CD8-positive, alpha-beta T cell (primary cell): ENCODE measurements at regions of chrX and their contacts with region 1.

Region 1: DNA sequence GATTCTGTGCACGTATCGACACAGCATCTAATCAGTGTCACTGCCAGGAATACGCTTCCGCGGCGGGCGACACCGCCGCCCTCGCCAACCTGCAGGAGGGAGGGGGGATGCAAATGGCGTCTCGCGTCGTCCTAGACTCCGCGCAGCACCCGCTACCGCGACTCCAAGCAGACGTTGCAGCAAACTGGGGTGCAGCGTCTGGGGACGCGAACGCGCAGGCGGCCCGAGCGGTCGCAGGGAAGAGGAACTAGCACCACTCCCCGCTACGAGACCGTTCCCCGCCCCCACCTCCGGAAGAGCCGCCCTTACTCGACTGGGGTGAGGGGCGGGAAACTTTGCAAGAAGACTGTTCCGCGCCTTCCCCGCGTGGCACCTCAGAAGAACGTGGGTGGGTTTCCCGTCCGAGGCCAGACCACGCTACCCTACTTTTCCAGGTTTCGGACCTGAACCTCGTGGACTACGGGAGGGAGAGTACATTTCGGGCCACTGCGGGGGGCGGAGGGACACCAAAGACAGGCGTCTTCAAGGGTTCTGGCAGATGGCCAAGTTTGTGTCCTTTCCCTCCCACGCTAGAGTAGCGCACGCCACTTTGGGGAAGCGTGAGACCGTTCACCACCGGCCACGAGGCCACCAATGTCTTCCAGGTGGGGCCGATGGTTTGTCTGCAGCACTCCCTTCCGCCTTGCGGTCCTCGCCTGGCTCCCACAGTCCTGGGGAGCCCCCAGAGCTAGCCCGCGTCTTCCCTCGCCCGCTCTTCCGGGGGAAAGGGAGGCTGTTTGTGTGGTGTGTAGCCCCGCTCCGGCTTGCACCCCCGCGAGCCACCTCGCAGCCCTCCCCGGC is 78.0 kb upstream of the BCOR start:
- DNase-seq: peak; percentile 52 to 90 (median 76)
- ATAC-seq: peak; percentile 50
- H3K4me3 ChIP-seq: peak overlapping the region; percentile 47 to 65
- H3K4me3 Mint-ChIP-seq: peak overlapping the region; percentile 88
- H3K27ac ChIP-seq: peak overlapping the region; percentile 73 to 95
- H3K27ac Mint-ChIP-seq: peak overlapping the region; percentile 97
- H3K4me1 ChIP-seq: peaks cover 30% of the 10 kb centered on the region
- H3K4me1 Mint-ChIP-seq: peaks cover 39% of the 10 kb centered on the region
- H3K27me3 ChIP-seq: no peaks in the 10 kb centered on the region
- H3K27me3 Mint-ChIP-seq: no peaks in the 10 kb centered on the region
- CTCF ChIP-seq: no peak

Region 2: DNA sequence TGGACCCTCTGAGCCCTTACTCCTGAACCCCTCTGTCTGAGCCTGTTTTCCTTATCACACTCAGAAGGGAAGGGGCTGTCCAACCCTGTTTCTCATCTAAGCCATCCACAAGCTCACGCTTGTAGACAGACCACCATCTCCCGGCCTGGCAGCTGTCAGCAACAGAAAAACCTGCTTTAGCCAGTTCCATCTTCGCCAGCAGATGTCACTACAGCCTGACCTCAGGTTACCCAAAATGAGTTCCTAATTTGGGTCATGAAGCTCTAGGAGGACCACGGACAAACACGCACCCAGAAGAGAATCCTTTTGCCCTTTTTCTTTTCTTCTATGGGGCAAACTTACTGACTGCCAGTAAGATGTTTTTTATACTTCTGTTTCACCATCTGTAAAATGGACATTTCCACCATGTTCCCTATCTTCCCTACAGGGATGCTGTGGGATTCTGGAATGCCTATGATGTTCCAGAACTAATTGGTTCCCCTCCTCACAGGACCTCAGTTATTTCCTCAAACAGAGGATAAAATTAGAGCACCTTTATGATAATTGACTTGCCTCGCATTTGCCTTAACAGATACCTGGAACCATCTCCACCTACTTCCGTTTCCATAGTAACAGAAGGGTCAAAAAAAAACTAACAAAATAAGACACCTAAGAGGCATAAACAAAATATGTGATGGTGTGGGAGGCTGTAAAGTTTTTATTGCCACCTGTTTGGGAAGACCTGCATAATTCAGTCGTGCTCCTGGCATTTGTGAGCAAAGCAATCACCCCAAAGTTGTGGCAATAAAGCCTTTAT is 523.2 kb before region 1 on chrX:
- CTCF ChIA-PET with region 1: no interaction called
- POLR2A ChIA-PET with region 1: no interaction called
- intact Hi-C with region 1: no loop called
- DNase-seq: peak in 2 of 9 experiments; percentile 6 to 30
- ATAC-seq: no peak
- H3K4me3 ChIP-seq: no peak overlapping the region
- H3K4me3 Mint-ChIP-seq: no peak overlapping the region
- H3K27ac ChIP-seq: no peak overlapping the region
- H3K27ac Mint-ChIP-seq: no peak overlapping the region
- H3K4me1 ChIP-seq: peaks cover 3% of the 10 kb centered on the region
- H3K4me1 Mint-ChIP-seq: peaks cover 10% of the 10 kb centered on the region
- H3K27me3 ChIP-seq: no peaks in the 10 kb centered on the region
- H3K27me3 Mint-ChIP-seq: peaks cover 3% of the 10 kb centered on the region
- CTCF ChIP-seq: no peak

Region 3: GRCh38 chrX:39772057-39772832 is 403.5 kb before region 1 on chrX:
- CTCF ChIA-PET with region 1: no interaction called
- POLR2A ChIA-PET with region 1: no interaction called
- intact Hi-C with region 1: loop called in 1 of 2 experiments (anchors 5 kb)
- DNase-seq: peak in 8 of 9 experiments; percentile 9 to 60 (median 54)
- ATAC-seq: peak; percentile 45
- H3K4me3 ChIP-seq: no peak overlapping the region
- H3K4me3 Mint-ChIP-seq: peak overlapping the region; percentile 61
- H3K27ac ChIP-seq: peak overlapping the region in 1 of 2 experiments; percentile 71
- H3K27ac Mint-ChIP-seq: peak overlapping the region; percentile 94
- H3K4me1 ChIP-seq: peaks cover 28% of the 10 kb centered on the region
- H3K4me1 Mint-ChIP-seq: peaks cover 47% of the 10 kb centered on the region
- H3K27me3 ChIP-seq: no peaks in the 10 kb centered on the region
- H3K27me3 Mint-ChIP-seq: no peaks in the 10 kb centered on the region
- CTCF ChIP-seq: no peak

Region 4: DNA sequence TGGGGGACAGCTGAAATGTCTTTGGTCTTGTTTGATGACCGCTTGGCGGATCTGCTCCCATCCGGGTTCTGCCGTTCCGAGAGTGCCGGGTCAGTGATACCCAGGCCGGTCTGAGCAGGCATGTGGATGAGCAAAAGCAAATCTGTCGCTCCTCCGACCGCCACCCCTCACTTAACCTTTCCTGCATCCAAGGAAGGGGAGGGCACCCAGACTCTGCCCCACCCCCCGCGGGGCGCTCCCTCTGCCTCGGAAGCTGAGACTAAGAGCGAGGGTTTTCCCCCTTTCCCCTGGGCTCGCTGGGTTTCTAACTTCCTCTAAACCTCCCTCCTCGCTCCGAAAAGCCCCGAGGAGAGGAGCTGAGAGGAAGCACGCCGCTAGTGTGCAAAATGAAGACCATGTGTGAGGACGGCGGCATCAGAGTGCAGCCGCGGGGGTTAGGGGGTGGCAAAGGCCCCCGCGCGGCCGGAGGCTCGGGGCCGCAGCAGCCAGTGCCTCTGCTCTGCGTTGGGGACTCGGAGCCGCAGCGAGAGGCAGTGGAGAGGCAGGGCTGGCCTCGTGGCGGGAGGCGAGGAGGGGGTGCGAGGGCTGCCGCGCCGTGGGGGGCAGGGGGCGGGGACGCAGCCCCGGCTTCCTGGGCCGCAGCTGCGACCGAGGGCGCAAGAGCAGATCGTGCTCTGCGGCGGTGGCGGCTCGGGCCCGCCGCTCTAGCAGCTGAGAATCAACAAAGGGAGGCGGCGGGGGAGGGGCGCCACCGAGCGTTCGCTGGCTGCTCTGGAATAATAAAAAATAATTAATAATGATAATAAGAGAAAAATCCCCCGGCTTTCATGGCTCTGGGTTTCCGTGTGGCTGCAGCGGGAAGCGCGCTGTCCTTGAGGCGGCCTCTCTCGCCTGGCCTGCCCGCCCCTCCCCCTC is 22.1 kb before region 1 on chrX:
- CTCF ChIA-PET with region 1: no interaction called
- POLR2A ChIA-PET with region 1: interaction called, 18 read pairs
- intact Hi-C with region 1: no loop called
- DNase-seq: peak in 6 of 9 experiments; percentile 53 to 87 (median 68)
- ATAC-seq: peak; percentile 59
- H3K4me3 ChIP-seq: peak overlapping the region; percentile 45 to 47
- H3K4me3 Mint-ChIP-seq: peak overlapping the region; percentile 81
- H3K27ac ChIP-seq: no peak overlapping the region
- H3K27ac Mint-ChIP-seq: no peak overlapping the region
- H3K4me1 ChIP-seq: no peaks in the 10 kb centered on the region
- H3K4me1 Mint-ChIP-seq: peaks cover 21% of the 10 kb centered on the region
- H3K27me3 ChIP-seq: no peaks in the 10 kb centered on the region
- H3K27me3 Mint-ChIP-seq: no peaks in the 10 kb centered on the region
- CTCF ChIP-seq: no peak

Region 5: GRCh38 chrX:40244980-40245379 is 69.2 kb after region 1 on chrX:
- CTCF ChIA-PET with region 1: interaction called, 5 read pairs
- POLR2A ChIA-PET with region 1: interaction called, 5 read pairs
- intact Hi-C with region 1: loop called in 1 of 2 experiments (anchors 5 kb)
- DNase-seq: peak in 2 of 9 experiments; percentile 8 to 35
- ATAC-seq: peak; percentile 56
- H3K4me3 ChIP-seq: no peak overlapping the region
- H3K4me3 Mint-ChIP-seq: peak overlapping the region; percentile 50
- H3K27ac ChIP-seq: no peak overlapping the region
- H3K27ac Mint-ChIP-seq: no peak overlapping the region
- H3K4me1 ChIP-seq: peaks cover 11% of the 10 kb centered on the region
- H3K4me1 Mint-ChIP-seq: peaks cover 9% of the 10 kb centered on the region
- H3K27me3 ChIP-seq: no peaks in the 10 kb centered on the region
- H3K27me3 Mint-ChIP-seq: no peaks in the 10 kb centered on the region
- CTCF ChIP-seq: no peak

Region 6: GRCh38 chrX:41022579-41022978 is 846.8 kb after region 1 on chrX:
- CTCF ChIA-PET with region 1: no interaction called
- POLR2A ChIA-PET with region 1: no interaction called
- intact Hi-C with region 1: no loop called
- DNase-seq: no peak
- ATAC-seq: no peak
- H3K4me3 ChIP-seq: no peak overlapping the region
- H3K4me3 Mint-ChIP-seq: no peak overlapping the region
- H3K27ac ChIP-seq: no peak overlapping the region
- H3K27ac Mint-ChIP-seq: no peak overlapping the region
- H3K4me1 ChIP-seq: no peaks in the 10 kb centered on the region
- H3K4me1 Mint-ChIP-seq: no peaks in the 10 kb centered on the region
- H3K27me3 ChIP-seq: no peaks in the 10 kb centered on the region
- H3K27me3 Mint-ChIP-seq: no peaks in the 10 kb centered on the region
- CTCF ChIP-seq: no peak

Region 7: DNA sequence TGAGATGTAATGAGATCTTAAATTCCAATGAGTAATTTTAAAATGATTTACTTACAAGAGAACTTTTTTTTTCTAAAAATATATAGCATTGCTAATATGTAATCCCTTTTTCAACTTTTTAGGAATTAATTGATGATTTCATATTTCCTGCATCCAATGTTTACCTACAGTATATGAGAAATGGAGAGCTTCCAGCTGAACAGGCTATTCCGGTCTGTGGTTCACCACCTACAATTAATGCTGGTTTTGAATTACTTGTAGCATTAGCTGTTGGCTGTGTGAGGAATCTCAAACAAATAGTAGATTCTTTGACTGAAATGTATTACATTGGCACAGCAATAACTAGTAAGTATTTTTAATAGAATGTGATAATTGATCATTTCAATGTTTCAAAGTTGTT is 1022.7 kb after region 1 on chrX:
- CTCF ChIA-PET with region 1: no interaction called
- POLR2A ChIA-PET with region 1: no interaction called
- intact Hi-C with region 1: no loop called
- DNase-seq: no peak
- ATAC-seq: no peak
- H3K4me3 ChIP-seq: no peak overlapping the region
- H3K4me3 Mint-ChIP-seq: no peak overlapping the region
- H3K27ac ChIP-seq: no peak overlapping the region
- H3K27ac Mint-ChIP-seq: no peak overlapping the region
- H3K4me1 ChIP-seq: no peaks in the 10 kb centered on the region
- H3K4me1 Mint-ChIP-seq: peaks cover 4% of the 10 kb centered on the region
- H3K27me3 ChIP-seq: no peaks in the 10 kb centered on the region
- H3K27me3 Mint-ChIP-seq: no peaks in the 10 kb centered on the region
- CTCF ChIP-seq: no peak

Region 8: DNA sequence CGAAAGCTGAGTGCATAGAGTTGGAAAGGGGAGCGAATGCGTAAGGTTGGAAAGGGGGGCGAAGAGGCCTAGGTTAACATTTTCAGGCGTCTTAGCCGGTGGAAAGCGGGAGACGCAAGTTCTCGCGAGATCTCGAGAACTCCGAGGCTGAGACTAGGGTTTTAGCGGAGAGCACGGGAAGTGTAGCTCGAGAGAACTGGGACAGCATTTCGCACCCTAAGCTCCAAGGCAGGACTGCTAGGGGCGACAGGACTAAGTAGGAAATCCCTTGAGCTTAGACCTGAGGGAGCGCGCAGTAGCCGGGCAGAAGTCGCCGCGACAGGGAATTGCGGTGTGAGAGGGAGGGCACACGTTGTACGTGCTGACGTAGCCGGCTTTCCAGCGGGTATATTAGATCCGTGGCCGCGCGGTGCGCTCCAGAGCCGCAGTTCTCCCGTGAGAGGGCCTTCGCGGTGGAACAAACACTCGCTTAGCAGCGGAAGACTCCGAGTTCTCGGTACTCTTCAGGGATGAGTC is 1158.1 kb after region 1 on chrX and contains the start of gene DDX3X:
- CTCF ChIA-PET with region 1: no interaction called
- POLR2A ChIA-PET with region 1: no interaction called
- intact Hi-C with region 1: loop called in 1 of 2 experiments (anchors 5 kb)
- DNase-seq: peak; percentile 58 to 95 (median 81)
- ATAC-seq: peak; percentile 55
- H3K4me3 ChIP-seq: peak within 1 kb of the TSS; percentile 93 to 100
- H3K4me3 Mint-ChIP-seq: peak within 1 kb of the TSS; percentile 95
- H3K27ac ChIP-seq: peak within 1 kb of the TSS; percentile 99
- H3K27ac Mint-ChIP-seq: peak within 1 kb of the TSS; percentile 99
- H3K4me1 ChIP-seq: peaks cover 14% of the 10 kb centered on the region
- H3K4me1 Mint-ChIP-seq: peaks cover 33% of the 10 kb centered on the region
- H3K27me3 ChIP-seq: no peaks in the 10 kb centered on the region
- H3K27me3 Mint-ChIP-seq: no peaks in the 10 kb centered on the region
- CTCF ChIP-seq: peak; percentile 23
- total RNA-seq, gene DDX3X: 643 to 648 TPM